ENCODE measurements at regions of chr16 and their contacts with region 1.

Region 1: DNA sequence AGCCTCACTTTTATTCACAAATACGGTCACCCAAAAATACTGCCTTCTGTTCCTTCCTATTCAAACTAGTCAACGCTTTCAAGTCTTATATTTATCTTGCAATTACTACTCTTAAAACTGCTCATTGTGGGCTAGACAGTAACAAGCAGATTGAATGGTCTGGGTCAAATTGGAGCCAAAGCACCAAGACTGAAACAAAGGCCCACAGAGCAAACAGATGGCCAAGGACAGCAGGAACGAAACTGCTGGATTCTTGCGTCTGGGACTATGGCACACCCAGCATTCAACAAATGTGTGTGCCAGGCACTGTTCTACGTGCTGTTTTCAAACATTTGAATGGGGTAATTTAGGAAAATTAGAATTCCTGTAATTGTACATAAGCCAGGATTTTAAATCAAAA is 250.1 kb upstream of the PSMD7 start:
- DNase-seq: no peak
- ATAC-seq: no peak
- H3K4me3 ChIP-seq: no peak overlapping the region
- H3K27ac ChIP-seq: no peak overlapping the region
- H3K4me1 ChIP-seq: no peaks in the 10 kb centered on the region
- H3K27me3 ChIP-seq: peaks cover 21% of the 10 kb centered on the region; the same call in 1 of the 2 replicates
- CTCF ChIP-seq: no peak
- POLR2A ChIP-seq: no peak
- RAD21 ChIP-seq: no peak

Region 2: DNA sequence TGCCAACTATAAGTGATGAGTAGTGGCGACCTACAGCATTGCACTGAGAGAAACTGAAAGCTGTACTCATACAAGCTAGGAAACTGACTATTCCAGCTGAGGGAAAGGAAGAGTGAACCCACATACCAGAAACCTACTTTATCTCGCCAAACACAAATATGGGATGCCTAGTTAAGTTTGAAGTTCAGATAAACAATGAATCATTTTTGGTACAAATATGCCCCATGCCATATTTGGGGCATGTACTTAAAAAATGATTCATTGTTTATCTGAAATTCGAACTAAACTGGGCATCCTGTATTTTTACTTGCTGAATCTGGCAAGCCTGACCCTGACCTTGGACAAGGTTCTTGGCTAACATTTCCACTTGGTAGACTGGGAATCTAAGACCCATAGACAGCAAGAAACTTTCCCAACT is 277.7 kb before region 1 on chr16:
- CTCF ChIA-PET with region 1: no interaction called
- POLR2A ChIA-PET with region 1: no interaction called
- RAD21 ChIA-PET with region 1: no interaction called
- intact Hi-C with region 1: no loop called
- DNase-seq: no peak
- ATAC-seq: no peak
- H3K4me3 ChIP-seq: no peak overlapping the region
- H3K27ac ChIP-seq: no peak overlapping the region
- H3K4me1 ChIP-seq: no peaks in the 10 kb centered on the region
- H3K27me3 ChIP-seq: peaks cover 15% of the 10 kb centered on the region
- CTCF ChIP-seq: no peak
- POLR2A ChIP-seq: no peak
- RAD21 ChIP-seq: no peak

Region 3: DNA sequence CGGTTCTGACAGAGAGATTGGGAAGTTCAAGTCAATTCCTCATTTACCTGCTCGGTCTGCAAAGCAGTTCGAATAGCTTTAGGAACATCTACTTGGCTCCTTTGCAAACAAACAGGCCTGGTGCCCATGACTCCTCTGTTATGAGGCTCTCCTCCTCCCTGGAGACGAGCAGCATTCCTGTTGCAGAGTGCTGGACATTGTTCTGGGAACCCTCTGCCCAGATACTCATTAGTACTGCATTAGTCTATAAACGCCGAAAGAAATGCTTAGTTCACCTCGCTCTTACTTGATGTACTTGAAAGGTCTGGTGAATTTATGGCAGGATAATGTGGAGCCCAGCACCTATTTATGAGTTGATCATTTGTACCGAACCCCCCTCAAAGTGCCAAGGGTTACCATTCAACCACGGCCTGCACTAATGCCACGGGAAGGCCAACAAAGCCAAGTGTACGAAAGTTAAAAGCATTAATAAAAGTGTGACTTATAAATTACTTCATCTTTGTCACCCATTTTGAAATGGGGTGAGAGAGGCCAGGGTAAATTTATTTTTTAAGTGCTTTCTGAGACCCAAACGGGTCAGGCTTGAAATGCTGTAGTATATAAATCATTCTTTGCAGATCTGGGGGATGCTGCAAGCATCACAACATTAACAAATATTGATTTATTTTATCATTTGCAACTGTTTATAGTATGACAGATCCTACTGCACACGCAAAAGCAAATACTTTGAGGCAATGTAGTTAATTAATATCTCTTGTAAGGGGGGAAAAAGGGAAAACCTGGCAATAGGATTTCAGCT is 228.8 kb before region 1 on chr16:
- CTCF ChIA-PET with region 1: no interaction called
- POLR2A ChIA-PET with region 1: no interaction called
- RAD21 ChIA-PET with region 1: no interaction called
- intact Hi-C with region 1: no loop called
- DNase-seq: no peak
- ATAC-seq: no peak
- H3K4me3 ChIP-seq: no peak overlapping the region
- H3K27ac ChIP-seq: no peak overlapping the region
- H3K4me1 ChIP-seq: no peaks in the 10 kb centered on the region
- H3K27me3 ChIP-seq: peaks cover 46% of the 10 kb centered on the region
- CTCF ChIP-seq: no peak
- POLR2A ChIP-seq: no peak
- RAD21 ChIP-seq: no peak

Region 4: DNA sequence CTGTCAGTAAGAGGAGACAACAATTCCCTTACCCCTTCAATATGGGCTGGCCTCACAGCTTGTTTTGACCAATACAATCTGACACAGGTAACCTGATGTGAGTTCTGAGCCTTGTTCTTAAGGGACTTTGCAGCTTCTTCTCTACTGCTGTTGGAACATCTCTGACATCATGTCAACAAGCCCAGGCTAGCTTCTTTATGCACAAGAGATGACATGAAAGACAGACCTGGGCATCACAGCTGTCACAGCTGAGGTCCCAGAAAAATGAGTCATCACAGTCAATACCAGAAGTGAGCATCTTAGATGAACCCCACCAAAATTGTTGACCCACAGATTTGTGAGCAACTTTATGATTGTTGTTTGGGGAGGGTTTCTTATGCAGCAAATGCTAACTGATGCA is 181.7 kb before region 1 on chr16:
- CTCF ChIA-PET with region 1: no interaction called
- POLR2A ChIA-PET with region 1: no interaction called
- RAD21 ChIA-PET with region 1: no interaction called
- intact Hi-C with region 1: no loop called
- DNase-seq: no peak
- ATAC-seq: no peak
- H3K4me3 ChIP-seq: no peak overlapping the region
- H3K27ac ChIP-seq: no peak overlapping the region
- H3K4me1 ChIP-seq: no peaks in the 10 kb centered on the region
- H3K27me3 ChIP-seq: peaks cover 37% of the 10 kb centered on the region
- CTCF ChIP-seq: no peak
- POLR2A ChIP-seq: no peak
- RAD21 ChIP-seq: no peak

Region 5: DNA sequence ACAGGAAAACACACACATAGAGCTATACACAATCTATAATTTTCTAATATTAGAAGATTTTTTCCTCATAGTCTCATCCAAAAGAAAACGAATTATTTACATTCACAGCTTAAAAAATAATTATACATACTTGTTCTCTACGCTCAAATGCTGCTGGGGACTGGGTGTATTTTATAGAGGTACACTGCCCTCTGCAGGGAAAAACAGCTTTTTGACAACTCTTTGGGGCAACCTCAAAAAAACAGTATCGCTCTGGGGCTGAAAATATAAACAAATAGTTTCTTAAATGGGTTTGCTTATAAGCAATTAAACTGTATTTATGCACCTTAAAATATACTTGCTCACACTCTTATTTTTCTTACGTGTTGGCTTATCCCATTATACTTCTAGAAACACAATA is 11.7 kb before region 1 on chr16:
- CTCF ChIA-PET with region 1: interaction called, 10 read pairs
- POLR2A ChIA-PET with region 1: no interaction called
- RAD21 ChIA-PET with region 1: no interaction called
- intact Hi-C with region 1: no loop called
- DNase-seq: peak; percentile 1
- ATAC-seq: peak; percentile 57; the same call in 1 of the 2 replicates
- H3K4me3 ChIP-seq: no peak overlapping the region
- H3K27ac ChIP-seq: no peak overlapping the region
- H3K4me1 ChIP-seq: no peaks in the 10 kb centered on the region
- H3K27me3 ChIP-seq: peaks cover 54% of the 10 kb centered on the region
- CTCF ChIP-seq: peak in 2 of 3 experiments; percentile 28 to 48; a peak in 4 of 6 replicates
- POLR2A ChIP-seq: no peak
- RAD21 ChIP-seq: peak; percentile 48